CD4-positive, alpha-beta T cell (primary cell): ENCODE measurements at regions of chr12 and their contacts with region 1.

Region 1: GRCh38 chr12:42568952-42569915 is 20.3 kb downstream of the PRICKLE1 start:
- DNase-seq: peak in 3 of 14 experiments; percentile 13 to 21 (median 20)
- ATAC-seq: no peak
- H3K4me3 ChIP-seq: no peak overlapping the region
- H3K4me3 Mint-ChIP-seq: no peak overlapping the region
- H3K27ac ChIP-seq: no peak overlapping the region
- H3K27ac Mint-ChIP-seq: no peak overlapping the region
- H3K4me1 ChIP-seq: no peaks in the 10 kb centered on the region
- H3K4me1 Mint-ChIP-seq: no peaks in the 10 kb centered on the region
- H3K27me3 ChIP-seq: no peaks in the 10 kb centered on the region
- H3K27me3 Mint-ChIP-seq: peaks cover 25% of the 10 kb centered on the region
- CTCF ChIP-seq: peak; percentile 24

Region 2: GRCh38 chr12:40953076-40953475 is 1616.2 kb before region 1 on chr12:
- CTCF ChIA-PET with region 1: no interaction called
- POLR2A ChIA-PET with region 1: no interaction called
- intact Hi-C with region 1: loop called in 1 of 2 experiments (anchors 5 kb)
- DNase-seq: no peak
- ATAC-seq: no peak
- H3K4me3 ChIP-seq: no peak overlapping the region
- H3K4me3 Mint-ChIP-seq: no peak overlapping the region
- H3K27ac ChIP-seq: no peak overlapping the region
- H3K27ac Mint-ChIP-seq: no peak overlapping the region
- H3K4me1 ChIP-seq: no peaks in the 10 kb centered on the region
- H3K4me1 Mint-ChIP-seq: no peaks in the 10 kb centered on the region
- H3K27me3 ChIP-seq: no peaks in the 10 kb centered on the region
- H3K27me3 Mint-ChIP-seq: no peaks in the 10 kb centered on the region
- CTCF ChIP-seq: no peak

Region 3: DNA sequence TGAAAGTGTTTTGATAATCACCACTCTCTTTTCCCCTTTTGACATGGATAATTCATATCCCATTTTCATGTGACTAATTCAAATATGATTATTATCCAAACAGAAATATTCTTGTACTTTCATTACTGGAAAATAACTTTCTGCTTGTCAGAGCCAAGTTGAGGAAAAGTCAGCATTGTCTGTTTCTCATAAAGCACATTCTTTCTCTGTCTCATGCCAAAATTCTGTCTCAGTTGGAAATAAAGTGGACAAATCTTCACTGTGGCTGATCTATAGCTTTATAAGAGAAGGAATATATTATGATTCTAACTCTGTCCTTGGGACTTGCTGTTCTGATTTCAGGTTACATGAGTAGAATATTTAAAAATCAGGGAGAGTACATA is 43.0 kb after region 1 on chr12:
- CTCF ChIA-PET with region 1: no interaction called
- POLR2A ChIA-PET with region 1: no interaction called
- intact Hi-C with region 1: no loop called
- DNase-seq: no peak
- ATAC-seq: no peak
- H3K4me3 ChIP-seq: no peak overlapping the region
- H3K4me3 Mint-ChIP-seq: no peak overlapping the region
- H3K27ac ChIP-seq: no peak overlapping the region
- H3K27ac Mint-ChIP-seq: no peak overlapping the region
- H3K4me1 ChIP-seq: no peaks in the 10 kb centered on the region
- H3K4me1 Mint-ChIP-seq: no peaks in the 10 kb centered on the region
- H3K27me3 ChIP-seq: no peaks in the 10 kb centered on the region
- H3K27me3 Mint-ChIP-seq: peaks cover 11% of the 10 kb centered on the region
- CTCF ChIP-seq: no peak